Esophagus muscularis mucosa (tissue), 4 donors: ENCODE measurements at regions of chr9 and their contacts with region 1.

Region 1: DNA sequence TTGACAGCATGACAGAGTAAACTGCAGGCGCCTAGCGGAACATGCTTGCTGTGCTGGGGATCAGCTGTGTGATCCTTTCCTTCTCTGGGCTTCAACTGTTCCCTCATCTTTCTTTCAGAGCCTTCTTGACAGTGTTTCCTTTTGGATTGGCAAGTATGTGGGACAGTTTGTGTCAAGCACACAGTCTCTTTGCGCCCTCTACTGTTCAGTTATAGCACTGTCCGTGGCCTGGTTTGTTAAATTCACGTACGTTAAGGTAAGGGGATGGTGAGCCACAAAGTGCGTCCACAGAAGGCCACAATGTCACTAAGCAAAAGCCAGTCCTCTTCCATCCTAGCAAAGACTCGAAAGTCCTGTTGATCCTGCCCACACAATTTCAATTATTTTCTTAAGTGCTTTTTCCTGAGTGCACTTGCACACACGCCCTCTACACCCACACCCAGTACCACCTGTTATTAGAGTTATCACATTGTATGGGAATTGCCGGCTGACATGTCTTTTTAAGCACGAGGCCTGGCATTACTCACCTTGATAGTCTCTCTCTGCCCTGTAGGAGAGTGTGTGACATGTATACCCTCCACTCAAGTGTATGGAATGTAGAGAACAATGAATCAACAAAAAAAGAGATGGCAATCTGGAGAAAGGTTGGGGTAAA is 22.5 kb upstream of the PTPN3 start:
- DNase-seq: no peak
- H3K4me3 ChIP-seq: no peak overlapping the region
- H3K27ac ChIP-seq: no peak overlapping the region
- H3K4me1 ChIP-seq: no peaks in the 10 kb centered on the region
- H3K27me3 ChIP-seq: no peaks in the 10 kb centered on the region
- CTCF ChIP-seq: peak; percentile 63 to 90 (median 69)
- EP300 ChIP-seq: no peak
- POLR2A ChIP-seq: no peak

Region 2: DNA sequence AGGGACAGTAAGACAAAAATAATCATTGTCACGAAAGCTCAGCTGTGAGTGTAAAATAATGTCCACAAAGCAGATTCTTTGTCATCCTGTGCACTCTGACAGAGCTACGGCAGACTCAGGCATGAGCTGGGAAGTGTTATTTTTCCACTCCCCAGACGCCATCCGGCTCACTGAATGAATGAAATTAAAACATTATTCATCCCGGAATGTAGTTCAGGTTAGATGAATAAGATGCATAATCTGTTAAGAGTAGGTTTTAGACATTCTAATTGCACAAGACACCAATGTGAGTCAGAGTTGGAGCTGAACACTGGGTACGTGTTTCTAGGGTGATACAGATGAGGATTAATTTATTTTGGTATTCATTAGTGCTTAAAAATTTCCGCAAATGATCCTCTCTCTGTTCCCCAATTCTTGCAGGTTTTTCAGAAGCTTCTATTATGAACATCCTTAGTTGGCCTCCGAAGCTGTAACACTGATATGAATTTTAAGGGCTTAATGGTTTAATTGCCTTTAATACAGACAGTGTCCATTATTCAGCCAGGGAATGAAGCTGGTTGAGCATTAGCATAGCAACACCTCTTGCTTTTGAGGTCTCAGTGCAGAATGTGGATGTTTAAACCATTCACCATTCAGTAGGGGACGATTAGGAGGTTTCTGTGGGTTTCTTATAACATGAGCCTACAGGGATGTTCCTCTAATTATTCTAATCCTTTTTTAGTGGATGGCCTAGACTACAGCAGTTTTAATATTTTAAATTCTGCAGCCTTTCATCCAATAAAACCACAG is 288.0 kb before region 1 on chr9:
- intact Hi-C with region 1: loop called (anchors 10 kb)
- DNase-seq: no peak
- H3K4me3 ChIP-seq: no peak overlapping the region
- H3K27ac ChIP-seq: no peak overlapping the region
- H3K4me1 ChIP-seq: no peaks in the 10 kb centered on the region
- H3K27me3 ChIP-seq: no peaks in the 10 kb centered on the region
- CTCF ChIP-seq: no peak
- EP300 ChIP-seq: no peak
- POLR2A ChIP-seq: no peak

Region 3: GRCh38 chr9:109440797-109441287 is 79.8 kb before region 1 on chr9:
- intact Hi-C with region 1: loop called (anchors 5 kb)
- DNase-seq: no peak
- H3K4me3 ChIP-seq: no peak overlapping the region
- H3K27ac ChIP-seq: no peak overlapping the region
- H3K4me1 ChIP-seq: peaks cover 0 to 4% (median 4%) of the 10 kb centered on the region in 4 donors
- H3K27me3 ChIP-seq: no peaks in the 10 kb centered on the region
- CTCF ChIP-seq: peak; percentile 53 to 76 (median 58)
- EP300 ChIP-seq: no peak
- POLR2A ChIP-seq: no peak

Region 4: DNA sequence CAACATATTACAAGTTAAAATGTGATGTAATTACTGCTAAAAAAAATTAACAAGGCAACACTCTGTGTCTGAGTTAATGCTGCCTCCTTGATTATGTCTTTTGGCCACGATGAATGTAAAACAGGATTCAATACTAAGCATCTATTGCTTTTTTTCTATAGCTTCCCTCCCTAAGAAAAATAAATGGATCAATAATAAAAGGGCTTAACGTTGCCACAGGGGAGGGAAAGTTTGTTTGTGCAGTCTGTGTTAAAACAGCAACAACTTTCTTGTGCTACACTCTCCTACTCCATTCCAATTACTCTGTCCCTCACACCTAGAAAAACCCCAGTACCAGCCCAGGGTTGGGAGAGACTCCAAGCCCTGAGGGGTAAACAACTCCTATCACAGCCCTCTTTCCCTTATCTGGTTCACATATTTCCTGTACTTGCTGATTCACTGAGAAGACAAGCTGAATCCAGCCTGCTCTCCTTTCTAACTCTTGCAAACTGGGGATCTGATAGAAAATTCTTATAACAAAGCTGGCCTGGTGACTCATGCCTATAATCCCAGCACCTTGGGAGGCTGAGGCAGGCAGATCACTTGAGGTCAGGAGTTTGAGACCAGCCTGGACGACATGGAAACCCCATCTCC is 67.3 kb before region 1 on chr9:
- intact Hi-C with region 1: no loop called
- DNase-seq: no peak
- H3K4me3 ChIP-seq: no peak overlapping the region
- H3K27ac ChIP-seq: no peak overlapping the region
- H3K4me1 ChIP-seq: no peaks in the 10 kb centered on the region
- H3K27me3 ChIP-seq: no peaks in the 10 kb centered on the region
- CTCF ChIP-seq: no peak
- EP300 ChIP-seq: no peak
- POLR2A ChIP-seq: no peak

Region 5: DNA sequence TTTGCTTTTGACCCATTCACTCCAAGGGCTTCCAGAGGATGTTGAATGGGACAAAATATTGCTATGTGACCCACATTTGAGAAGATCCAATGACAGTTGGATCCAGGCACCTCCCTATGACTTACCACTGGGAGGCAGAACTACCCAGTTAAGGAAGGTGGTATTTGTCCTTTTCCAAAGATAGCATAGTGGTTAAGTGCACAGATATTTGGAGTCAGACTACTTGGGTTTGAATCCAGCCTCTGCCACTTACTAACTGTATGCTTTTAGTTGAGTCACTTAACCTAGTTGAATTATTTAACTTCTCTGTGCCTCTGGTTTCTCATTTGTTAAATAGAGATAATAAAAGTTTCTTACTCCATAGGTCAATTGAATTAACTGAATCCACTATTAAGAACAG is 184.9 kb after region 1 on chr9:
- intact Hi-C with region 1: no loop called
- DNase-seq: no peak
- H3K4me3 ChIP-seq: no peak overlapping the region
- H3K27ac ChIP-seq: no peak overlapping the region
- H3K4me1 ChIP-seq: peaks cover 17 to 23% (median 19%) of the 10 kb centered on the region in 4 donors
- H3K27me3 ChIP-seq: no peaks in the 10 kb centered on the region
- CTCF ChIP-seq: no peak
- EP300 ChIP-seq: no peak
- POLR2A ChIP-seq: no peak

Region 6: DNA sequence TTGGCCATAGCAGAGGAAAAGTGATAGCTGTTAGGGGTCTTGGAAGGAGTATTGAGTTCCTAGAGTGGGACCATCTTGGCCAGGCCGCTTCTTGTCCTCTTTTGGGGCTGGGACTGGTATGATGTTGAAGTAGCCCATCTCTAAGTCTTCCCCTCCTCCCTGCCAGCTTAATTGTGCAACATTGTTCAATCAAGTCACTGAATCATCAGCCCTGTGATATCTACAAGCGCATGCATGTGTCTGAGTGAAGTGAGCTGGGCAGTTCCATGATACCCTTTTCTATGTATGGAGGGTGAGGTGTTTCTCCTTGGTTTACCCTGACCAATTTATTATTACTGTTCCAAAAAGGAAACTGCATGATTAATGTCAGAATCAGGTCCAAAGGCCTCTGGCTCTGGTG is 575.2 kb after region 1 on chr9:
- intact Hi-C with region 1: no loop called
- DNase-seq: no peak
- H3K4me3 ChIP-seq: no peak overlapping the region
- H3K27ac ChIP-seq: no peak overlapping the region
- H3K4me1 ChIP-seq: peaks cover 27 to 52% (median 39%) of the 10 kb centered on the region in 4 donors
- H3K27me3 ChIP-seq: no peaks in the 10 kb centered on the region
- CTCF ChIP-seq: no peak
- EP300 ChIP-seq: no peak
- POLR2A ChIP-seq: no peak